ENCODE measurements at regions of chr17 and their contacts with region 1.

Region 1: GRCh38 chr17:31475378-31476162 is 84.1 kb downstream of the RAB11FIP4 start:
- DNase-seq: no peak
- ATAC-seq: no peak
- H3K4me3 ChIP-seq: no peak overlapping the region
- H3K4me3 Mint-ChIP-seq: no peak overlapping the region
- H3K27ac ChIP-seq: no peak overlapping the region
- H3K27ac Mint-ChIP-seq: no peak overlapping the region
- H3K4me1 ChIP-seq: no peaks in the 10 kb centered on the region
- H3K4me1 Mint-ChIP-seq: no peaks in the 10 kb centered on the region
- H3K27me3 ChIP-seq: peaks cover 0 to 4% (median 0%) of the 10 kb centered on the region in 4 experiments
- H3K27me3 Mint-ChIP-seq: no peaks in the 10 kb centered on the region
- CTCF ChIP-seq: no peak

Region 2: GRCh38 chr17:31446195-31446967 is 29.2 kb before region 1 on chr17:
- CTCF ChIA-PET with region 1: no interaction called
- POLR2A ChIA-PET with region 1: no interaction called
- intact Hi-C with region 1: loop called (anchors 5 kb)
- DNase-seq: no peak
- ATAC-seq: no peak
- H3K4me3 ChIP-seq: no peak overlapping the region
- H3K4me3 Mint-ChIP-seq: no peak overlapping the region
- H3K27ac ChIP-seq: no peak overlapping the region
- H3K27ac Mint-ChIP-seq: no peak overlapping the region
- H3K4me1 ChIP-seq: peaks cover 1 to 2% of the 10 kb centered on the region in 2 donors
- H3K4me1 Mint-ChIP-seq: peaks cover 6% of the 10 kb centered on the region
- H3K27me3 ChIP-seq: no peaks in the 10 kb centered on the region
- H3K27me3 Mint-ChIP-seq: peaks cover 3% of the 10 kb centered on the region
- CTCF ChIP-seq: no peak

Region 3: DNA sequence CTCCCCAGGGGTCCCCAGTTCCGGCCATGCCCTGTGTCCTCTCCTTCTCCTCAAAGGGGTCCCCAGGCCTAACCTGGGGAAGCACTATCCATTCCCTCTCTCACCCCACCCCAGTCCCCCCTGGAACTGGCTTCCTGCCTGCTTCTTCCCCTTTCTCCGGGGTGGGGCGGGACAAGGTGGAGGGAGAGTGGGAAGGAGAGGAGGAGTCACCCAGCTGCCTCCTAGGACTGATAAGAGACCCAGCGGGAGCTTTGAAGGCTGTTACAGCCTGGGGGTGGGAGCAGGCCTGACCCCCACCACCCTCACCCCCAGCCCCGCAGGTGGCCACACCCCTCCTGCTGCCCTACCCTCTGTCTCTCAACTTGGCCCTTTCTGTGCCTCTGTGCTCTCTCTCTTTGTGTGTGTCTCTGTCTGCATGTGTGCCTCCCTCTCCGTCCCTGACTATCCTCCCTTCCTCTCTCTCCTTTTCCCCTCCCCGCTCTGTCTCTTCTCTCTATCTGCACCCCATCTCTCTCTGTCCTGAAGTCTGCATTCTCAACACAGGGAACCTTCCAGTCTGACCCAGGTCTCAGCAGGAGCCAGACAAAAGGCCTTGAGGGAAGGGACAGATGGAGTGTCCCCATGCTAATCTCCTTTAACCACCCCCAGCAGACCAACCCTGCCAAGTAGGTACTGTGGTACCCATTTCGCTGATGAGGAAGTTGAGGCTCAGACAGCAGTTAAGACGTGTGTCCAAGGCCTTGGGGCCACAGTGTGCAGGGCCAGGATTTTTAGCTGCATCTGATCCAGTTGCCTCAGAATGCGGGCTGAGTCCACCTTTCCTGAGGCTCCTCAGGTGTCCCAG is 18.0 kb before region 1 on chr17:
- CTCF ChIA-PET with region 1: no interaction called
- POLR2A ChIA-PET with region 1: no interaction called
- intact Hi-C with region 1: no loop called
- DNase-seq: no peak
- ATAC-seq: no peak
- H3K4me3 ChIP-seq: no peak overlapping the region
- H3K4me3 Mint-ChIP-seq: no peak overlapping the region
- H3K27ac ChIP-seq: no peak overlapping the region
- H3K27ac Mint-ChIP-seq: no peak overlapping the region
- H3K4me1 ChIP-seq: peaks cover 0 to 5% of the 10 kb centered on the region in 2 donors
- H3K4me1 Mint-ChIP-seq: peaks cover 3% of the 10 kb centered on the region
- H3K27me3 ChIP-seq: no peaks in the 10 kb centered on the region
- H3K27me3 Mint-ChIP-seq: no peaks in the 10 kb centered on the region
- CTCF ChIP-seq: no peak

Measured in B cell (primary cell).